ENCODE measurements at regions of chr11 and their contacts with region 1.

Region 1: DNA sequence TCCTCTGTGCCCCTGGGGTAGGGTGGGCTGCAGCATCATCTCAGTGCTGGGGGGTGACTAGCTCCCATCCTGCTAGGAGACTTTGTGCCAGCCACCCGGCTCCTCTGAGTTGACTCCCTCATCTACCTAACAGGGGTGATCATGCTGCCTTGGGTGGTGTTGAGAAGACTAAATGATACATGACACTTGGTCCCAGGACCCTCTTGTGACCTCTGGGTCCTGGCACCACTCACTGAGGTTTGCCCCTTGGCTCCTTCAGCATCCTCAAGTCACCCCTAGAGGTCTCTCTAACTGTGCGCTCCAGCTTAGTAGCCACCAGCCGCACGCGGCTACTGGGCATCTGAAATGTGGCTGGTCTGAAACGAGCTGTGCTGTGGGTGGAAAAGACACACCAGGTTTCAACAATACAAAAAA is 72.1 kb downstream of the LRRC32 start:
- DNase-seq: peak in 1 of 2 donors; percentile 22
- ATAC-seq: peak in 1 of 3 donors; percentile 53
- H3K4me3 ChIP-seq: no peak overlapping the region
- H3K4me3 Mint-ChIP-seq: no peak overlapping the region
- H3K27ac ChIP-seq: no peak overlapping the region
- H3K27ac Mint-ChIP-seq: no peak overlapping the region
- H3K4me1 ChIP-seq: no peaks in the 10 kb centered on the region
- H3K4me1 Mint-ChIP-seq: no peaks in the 10 kb centered on the region
- H3K27me3 ChIP-seq: no peaks in the 10 kb centered on the region
- H3K27me3 Mint-ChIP-seq: peaks cover 4 to 8% of the 10 kb centered on the region in 2 donors
- CTCF ChIP-seq: no peak

Region 2: GRCh38 chr11:76680518-76681425 is 82.3 kb after region 1 on chr11:
- intact Hi-C with region 1: loop called (anchors 2 kb)
- DNase-seq: peak; percentile 40 to 73
- ATAC-seq: peak; percentile 45 to 78 (median 77)
- H3K4me3 ChIP-seq: no peak overlapping the region
- H3K4me3 Mint-ChIP-seq: no peak overlapping the region
- H3K27ac ChIP-seq: no peak overlapping the region
- H3K27ac Mint-ChIP-seq: no peak overlapping the region
- H3K4me1 ChIP-seq: peaks cover 8% of the 10 kb centered on the region
- H3K4me1 Mint-ChIP-seq: peaks cover 0 to 16% of the 10 kb centered on the region in 2 donors
- H3K27me3 ChIP-seq: peaks cover 3% of the 10 kb centered on the region
- H3K27me3 Mint-ChIP-seq: peaks cover 11 to 23% of the 10 kb centered on the region in 2 donors
- CTCF ChIP-seq: peak; percentile 78

Measured in natural killer cell (primary cell).